Gastrocnemius medialis (tissue), 4 donors: ENCODE measurements at regions of chr12 and their contacts with region 1.

Region 1: DNA sequence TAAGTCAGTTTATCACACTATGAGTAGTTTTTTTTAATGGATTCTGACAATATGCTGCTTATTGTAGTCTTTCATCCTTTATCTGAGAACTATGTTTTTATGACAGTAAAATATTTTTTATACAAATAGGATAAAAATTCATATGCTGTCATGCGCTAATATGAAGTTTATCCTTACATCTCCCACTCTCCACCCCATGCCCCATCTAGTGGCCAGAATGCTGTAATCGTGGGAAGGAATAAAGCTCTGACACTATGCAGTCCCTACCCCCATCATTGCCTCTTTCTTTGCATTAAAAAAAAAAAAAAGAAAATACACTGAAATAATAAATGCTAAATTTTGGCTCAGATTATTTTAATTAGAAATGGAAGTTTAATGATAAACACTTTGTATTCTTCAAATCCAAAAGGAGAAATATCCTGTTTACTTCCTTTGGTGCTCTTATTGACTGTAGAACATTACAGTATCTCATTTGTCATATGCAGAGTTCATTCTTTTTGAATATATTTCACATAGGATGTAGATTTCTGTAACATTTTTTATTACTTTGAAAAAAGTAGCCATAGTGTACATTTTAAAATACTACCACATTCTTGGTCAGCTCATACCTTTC is 145.9 kb upstream of the SLCO1C1 start:
- DNase-seq: no peak
- ATAC-seq: peak in 1 of 2 donors; percentile 53
- H3K4me3 ChIP-seq: no peak overlapping the region
- H3K27ac ChIP-seq: no peak overlapping the region
- H3K4me1 ChIP-seq: no peaks in the 10 kb centered on the region
- H3K27me3 ChIP-seq: no peaks in the 10 kb centered on the region
- CTCF ChIP-seq: peak; percentile 21 to 55 (median 26)
- POLR2A ChIP-seq: no peak

Region 2: DNA sequence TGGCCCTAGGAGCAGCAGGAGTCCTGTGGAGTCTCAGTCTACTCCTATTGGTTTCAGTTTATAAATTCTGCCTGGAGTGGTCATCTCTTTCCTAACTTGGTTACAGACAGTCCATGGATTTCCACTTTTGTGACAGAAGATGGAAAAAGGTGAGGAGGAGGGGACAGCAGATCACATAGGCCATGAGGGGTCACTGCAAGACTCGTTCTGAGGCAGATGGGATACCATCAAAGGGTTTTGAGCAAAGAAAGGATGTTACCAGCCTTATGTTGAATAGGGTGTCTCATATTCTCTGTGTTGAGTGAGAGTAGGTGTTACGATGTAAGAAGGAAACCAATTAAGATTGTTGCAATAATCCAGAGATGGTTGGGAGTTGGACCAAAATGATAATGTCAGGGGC is 165.6 kb before region 1 on chr12:
- in situ Hi-C with region 1: no loop called
- intact Hi-C with region 1: loop called (anchors 10 kb)
- DNase-seq: no peak
- ATAC-seq: no peak
- H3K4me3 ChIP-seq: no peak overlapping the region
- H3K27ac ChIP-seq: no peak overlapping the region
- H3K4me1 ChIP-seq: no peaks in the 10 kb centered on the region
- H3K27me3 ChIP-seq: no peaks in the 10 kb centered on the region
- CTCF ChIP-seq: no peak
- POLR2A ChIP-seq: no peak

Region 3: GRCh38 chr12:20415028-20415427 is 134.2 kb before region 1 on chr12:
- in situ Hi-C with region 1: no loop called
- intact Hi-C with region 1: no loop called
- DNase-seq: no peak
- ATAC-seq: peak in 1 of 2 donors; percentile 24
- H3K4me3 ChIP-seq: peak overlapping the region in 3 of 4 donors; percentile 8 to 28 (median 27)
- H3K27ac ChIP-seq: peak overlapping the region in 2 of 4 donors; percentile 10 to 32
- H3K4me1 ChIP-seq: no peaks in the 10 kb centered on the region
- H3K27me3 ChIP-seq: no peaks in the 10 kb centered on the region
- CTCF ChIP-seq: no peak
- POLR2A ChIP-seq: no peak

Region 4: DNA sequence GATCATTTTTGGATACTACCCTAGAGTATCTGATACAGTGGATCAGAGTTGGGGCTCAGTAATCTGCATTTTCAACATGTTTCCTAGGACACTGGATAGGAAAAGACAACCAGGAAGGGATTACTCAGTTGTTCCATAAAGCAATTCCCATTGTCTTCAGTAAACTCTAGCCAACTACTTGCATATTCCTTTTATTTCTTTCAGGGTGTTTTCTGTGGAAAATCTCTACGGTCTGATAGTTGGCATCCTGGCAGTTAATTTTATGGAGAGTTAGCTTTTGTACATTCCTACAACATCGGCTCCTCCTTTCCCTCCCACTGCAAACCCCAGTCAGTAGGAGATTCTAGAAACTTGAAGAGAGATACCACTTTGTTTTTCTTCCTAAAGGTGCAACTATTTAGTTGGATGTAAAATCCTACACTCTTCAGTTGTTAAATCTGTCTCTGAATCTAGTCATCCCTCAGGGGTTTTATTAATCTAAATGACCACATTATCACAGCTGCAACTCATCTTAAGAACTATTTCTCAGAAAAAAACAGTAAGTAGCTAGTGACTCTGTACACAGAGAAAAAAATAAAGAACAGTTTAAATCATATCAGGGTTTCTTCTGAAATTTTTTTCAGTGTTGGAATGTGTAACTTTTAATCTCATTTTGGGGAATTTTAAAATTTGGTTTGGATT is 77.0 kb before region 1 on chr12:
- in situ Hi-C with region 1: no loop called
- intact Hi-C with region 1: loop called (anchors 5 kb)
- DNase-seq: no peak
- ATAC-seq: no peak
- H3K4me3 ChIP-seq: no peak overlapping the region
- H3K27ac ChIP-seq: no peak overlapping the region
- H3K4me1 ChIP-seq: no peaks in the 10 kb centered on the region
- H3K27me3 ChIP-seq: no peaks in the 10 kb centered on the region
- CTCF ChIP-seq: no peak
- POLR2A ChIP-seq: no peak